ENCODE measurements at regions of chr4 and their contacts with region 1.

Region 1: GRCh38 chr4:36351082-36351666 is 69.8 kb downstream of the DTHD1 start:
- DNase-seq: peak; percentile 71
- H3K4me3 ChIP-seq: no peak overlapping the region
- H3K27ac ChIP-seq: no peak overlapping the region
- H3K4me1 ChIP-seq: no peaks in the 10 kb centered on the region
- H3K27me3 ChIP-seq: no peaks in the 10 kb centered on the region
- CTCF ChIP-seq: peak in 3 of 4 experiments; percentile 34 to 51 (median 46)
- EP300 ChIP-seq: no peak
- POLR2A ChIP-seq: no peak

Region 2: GRCh38 chr4:37389967-37390580 is 1038.9 kb after region 1 on chr4:
- intact Hi-C with region 1: loop called (anchors 10 kb)
- DNase-seq: no peak
- H3K4me3 ChIP-seq: no peak overlapping the region
- H3K27ac ChIP-seq: no peak overlapping the region
- H3K4me1 ChIP-seq: no peaks in the 10 kb centered on the region
- H3K27me3 ChIP-seq: no peaks in the 10 kb centered on the region
- CTCF ChIP-seq: peak; percentile 7 to 70 (median 40)
- EP300 ChIP-seq: no peak
- POLR2A ChIP-seq: no peak

Measured in sigmoid colon (tissue), 7 donors.